Common myeloid progenitor, CD34-positive (primary cell): ENCODE measurements at regions of chr17 and their contacts with region 1.

Region 1: GRCh38 chr17:5304636-5305035 is 22.6 kb downstream of the RABEP1 start:
- DNase-seq: no peak
- H3K4me3 ChIP-seq: no peak overlapping the region
- H3K27ac ChIP-seq: no peak overlapping the region
- H3K4me1 ChIP-seq: peaks cover 0 to 13% (median 0%) of the 10 kb centered on the region in 4 experiments
- H3K27me3 ChIP-seq: no peaks in the 10 kb centered on the region

Region 2: GRCh38 chr17:5248821-5249479 is 55.7 kb before region 1 on chr17:
- CTCF ChIA-PET with region 1: interaction called, 11 read pairs
- POLR2A ChIA-PET with region 1: no interaction called
- DNase-seq: no peak
- H3K4me3 ChIP-seq: no peak overlapping the region
- H3K27ac ChIP-seq: no peak overlapping the region
- H3K4me1 ChIP-seq: peaks cover 0 to 7% (median 0%) of the 10 kb centered on the region in 4 experiments
- H3K27me3 ChIP-seq: no peaks in the 10 kb centered on the region